CD14-positive monocyte (primary cell): ENCODE measurements at regions of chr7 and their contacts with region 1.

Region 1: DNA sequence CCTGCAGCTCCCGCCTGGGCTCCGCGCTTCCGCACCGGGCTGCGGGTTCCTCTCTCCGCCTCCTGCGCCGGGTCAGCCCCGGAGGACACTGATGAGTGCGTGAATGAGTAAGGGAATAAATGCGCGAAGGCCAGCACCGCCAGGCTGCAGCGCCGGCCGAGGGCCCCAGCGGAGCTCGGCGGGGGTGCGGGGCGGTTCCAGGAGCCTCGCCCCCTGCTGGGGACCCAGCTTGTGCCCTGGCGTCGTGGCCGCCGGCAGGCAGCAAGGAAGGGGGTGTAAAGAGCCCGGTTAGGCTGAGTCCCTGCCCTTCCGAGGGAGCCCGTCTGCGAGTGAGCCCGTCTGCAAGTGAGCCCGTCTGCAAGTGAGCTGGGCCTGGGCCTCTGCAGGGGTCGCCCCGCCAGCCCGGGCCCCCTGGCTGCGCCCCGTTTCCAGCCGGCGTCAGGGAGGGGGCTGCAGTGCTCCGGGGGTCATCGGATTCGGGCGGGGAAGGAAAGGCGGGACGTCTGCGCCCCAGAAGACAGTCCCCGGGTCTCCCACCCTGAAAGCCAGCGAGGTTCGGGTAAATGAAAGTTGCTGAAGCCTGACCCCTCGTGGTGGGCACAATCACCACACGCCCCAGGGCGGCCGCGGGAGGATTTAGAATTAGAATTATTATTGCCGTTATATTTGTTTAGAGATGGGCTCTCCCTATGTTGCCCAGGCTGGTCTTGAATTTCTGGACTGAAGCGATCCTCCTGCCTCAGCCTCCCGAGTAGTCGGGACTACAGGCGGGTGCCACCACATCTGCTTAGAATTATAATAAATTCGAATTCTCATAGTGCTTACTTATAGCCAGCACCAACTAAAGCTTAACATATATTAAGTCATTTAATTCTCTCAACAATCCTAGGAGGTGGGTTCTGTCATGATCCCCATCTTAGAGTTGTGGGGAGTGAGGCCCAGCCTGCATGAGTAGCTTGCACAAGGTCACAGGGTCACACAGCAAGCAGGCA is 8.6 kb upstream of the CRYGN start:
- DNase-seq: peak; percentile 54 to 57 (median 56)
- H3K4me3 ChIP-seq: peak overlapping the region; percentile 43 to 81 (median 49)
- H3K4me3 Mint-ChIP-seq: peak overlapping the region; percentile 77 to 83
- H3K27ac ChIP-seq: peak overlapping the region in 1 of 2 donors; percentile 12
- H3K27ac Mint-ChIP-seq: peak overlapping the region in 1 of 7 donors; percentile 69
- H3K4me1 ChIP-seq: peaks cover 0 to 4% of the 10 kb centered on the region in 2 donors
- H3K4me1 Mint-ChIP-seq: peaks cover 2% of the 10 kb centered on the region
- H3K27me3 ChIP-seq: peaks cover 0 to 9% of the 10 kb centered on the region in 2 donors
- H3K27me3 Mint-ChIP-seq: peaks cover 2 to 25% (median 22%) of the 10 kb centered on the region in 3 donors
- CTCF ChIP-seq: peak; percentile 92

Region 2: DNA sequence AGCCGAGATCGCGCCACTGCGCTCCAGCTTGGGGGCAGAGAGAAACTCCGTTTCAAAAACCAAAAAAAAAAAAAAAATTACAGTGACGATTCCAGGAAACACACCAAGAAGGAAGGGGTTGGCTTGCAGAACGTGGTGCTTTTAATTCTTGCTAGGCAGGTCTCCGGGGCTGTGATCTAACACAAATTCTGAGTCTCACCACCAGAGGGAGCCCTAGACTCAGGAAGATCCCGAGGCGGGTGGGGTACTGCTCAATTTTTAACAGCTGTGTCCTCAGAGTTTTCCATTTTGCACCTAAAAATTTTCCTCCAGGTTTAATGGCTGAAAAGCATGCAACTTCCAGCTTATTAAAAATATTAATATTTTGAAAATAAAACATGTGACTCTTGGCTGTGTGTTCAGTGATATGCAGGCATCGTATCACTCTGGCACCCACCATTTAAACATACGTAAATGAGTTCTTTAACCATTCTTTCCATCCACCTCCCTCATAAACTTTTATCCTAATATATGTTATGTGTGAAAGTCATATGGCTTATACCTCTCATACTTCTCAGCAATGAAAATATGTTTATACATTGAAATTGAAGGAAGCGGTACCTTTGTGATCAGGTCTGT is 133.4 kb before region 1 on chr7:
- intact Hi-C with region 1: loop called (anchors 5 kb)
- DNase-seq: peak; percentile 55 to 73 (median 69)
- H3K4me3 ChIP-seq: no peak overlapping the region
- H3K4me3 Mint-ChIP-seq: peak overlapping the region in 1 of 2 donors; percentile 81
- H3K27ac ChIP-seq: no peak overlapping the region
- H3K27ac Mint-ChIP-seq: no peak overlapping the region
- H3K4me1 ChIP-seq: peaks cover 3 to 4% of the 10 kb centered on the region in 2 donors
- H3K4me1 Mint-ChIP-seq: peaks cover 6% of the 10 kb centered on the region
- H3K27me3 ChIP-seq: no peaks in the 10 kb centered on the region
- H3K27me3 Mint-ChIP-seq: peaks cover 0 to 8% (median 0%) of the 10 kb centered on the region in 3 donors
- CTCF ChIP-seq: peak; percentile 92

Region 3: GRCh38 chr7:151368136-151368571 is 80.4 kb before region 1 on chr7:
- intact Hi-C with region 1: loop called (anchors 1 to 2 kb)
- DNase-seq: peak; percentile 60 to 68 (median 66)
- H3K4me3 ChIP-seq: no peak overlapping the region
- H3K4me3 Mint-ChIP-seq: no peak overlapping the region
- H3K27ac ChIP-seq: no peak overlapping the region
- H3K27ac Mint-ChIP-seq: no peak overlapping the region
- H3K4me1 ChIP-seq: no peaks in the 10 kb centered on the region
- H3K4me1 Mint-ChIP-seq: no peaks in the 10 kb centered on the region
- H3K27me3 ChIP-seq: no peaks in the 10 kb centered on the region
- H3K27me3 Mint-ChIP-seq: peaks cover 0 to 3% (median 2%) of the 10 kb centered on the region in 3 donors
- CTCF ChIP-seq: peak; percentile 97

Region 4: GRCh38 chr7:151381348-151382078 is 67.0 kb before region 1 on chr7:
- intact Hi-C with region 1: loop called in 1 of 2 experiments (anchors 5 kb)
- DNase-seq: no peak
- H3K4me3 ChIP-seq: peak overlapping the region in 2 of 3 experiments; percentile 1 to 66
- H3K4me3 Mint-ChIP-seq: peak overlapping the region; percentile 63 to 81
- H3K27ac ChIP-seq: no peak overlapping the region
- H3K27ac Mint-ChIP-seq: no peak overlapping the region
- H3K4me1 ChIP-seq: peaks cover 15 to 22% of the 10 kb centered on the region in 2 donors
- H3K4me1 Mint-ChIP-seq: peaks cover 11% of the 10 kb centered on the region
- H3K27me3 ChIP-seq: peaks cover 12 to 37% of the 10 kb centered on the region in 2 donors
- H3K27me3 Mint-ChIP-seq: peaks cover 36 to 52% (median 43%) of the 10 kb centered on the region in 3 donors
- CTCF ChIP-seq: no peak